Esophagus squamous epithelium (tissue), 5 donors: ENCODE measurements at regions of chr9 and their contacts with region 1.

Region 1: DNA sequence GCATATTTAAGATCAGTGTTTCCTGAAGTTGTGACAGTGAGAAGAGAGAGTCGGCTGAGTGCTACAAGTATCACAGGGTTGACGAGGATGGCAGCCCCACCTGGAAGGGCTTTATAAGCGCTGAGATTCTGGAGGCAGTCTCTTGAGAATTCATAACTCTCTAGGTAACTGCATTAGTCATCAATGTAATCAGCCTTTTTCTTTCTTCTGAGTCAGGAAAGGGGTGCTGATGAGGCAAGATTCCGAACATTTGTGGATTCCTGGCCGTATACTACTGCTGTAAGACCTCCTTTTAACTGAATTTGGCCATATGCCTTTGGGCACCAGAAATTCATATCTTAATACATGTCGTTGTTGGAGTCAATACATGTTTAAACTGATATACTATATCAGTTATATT is 6.6 kb upstream of the RNF20 start:
- DNase-seq: no peak
- H3K4me3 ChIP-seq: no peak overlapping the region
- H3K27ac ChIP-seq: no peak overlapping the region
- H3K4me1 ChIP-seq: peaks cover 0 to 8% (median 0%) of the 10 kb centered on the region in 3 donors
- H3K27me3 ChIP-seq: no peaks in the 10 kb centered on the region
- CTCF ChIP-seq: no peak
- POLR2A ChIP-seq: no peak

Region 2: GRCh38 chr9:101458955-101459631 is 68.0 kb before region 1 on chr9:
- intact Hi-C with region 1: loop called (anchors 5 kb)
- DNase-seq: no peak
- H3K4me3 ChIP-seq: no peak overlapping the region
- H3K27ac ChIP-seq: no peak overlapping the region
- H3K4me1 ChIP-seq: no peaks in the 10 kb centered on the region
- H3K27me3 ChIP-seq: peaks cover 0 to 4% (median 0%) of the 10 kb centered on the region in 4 donors
- CTCF ChIP-seq: peak; percentile 49 to 77 (median 66)
- POLR2A ChIP-seq: no peak